CD8-positive, alpha-beta T cell (primary cell): ENCODE measurements at regions of chr19 and their contacts with region 1.

Region 1: DNA sequence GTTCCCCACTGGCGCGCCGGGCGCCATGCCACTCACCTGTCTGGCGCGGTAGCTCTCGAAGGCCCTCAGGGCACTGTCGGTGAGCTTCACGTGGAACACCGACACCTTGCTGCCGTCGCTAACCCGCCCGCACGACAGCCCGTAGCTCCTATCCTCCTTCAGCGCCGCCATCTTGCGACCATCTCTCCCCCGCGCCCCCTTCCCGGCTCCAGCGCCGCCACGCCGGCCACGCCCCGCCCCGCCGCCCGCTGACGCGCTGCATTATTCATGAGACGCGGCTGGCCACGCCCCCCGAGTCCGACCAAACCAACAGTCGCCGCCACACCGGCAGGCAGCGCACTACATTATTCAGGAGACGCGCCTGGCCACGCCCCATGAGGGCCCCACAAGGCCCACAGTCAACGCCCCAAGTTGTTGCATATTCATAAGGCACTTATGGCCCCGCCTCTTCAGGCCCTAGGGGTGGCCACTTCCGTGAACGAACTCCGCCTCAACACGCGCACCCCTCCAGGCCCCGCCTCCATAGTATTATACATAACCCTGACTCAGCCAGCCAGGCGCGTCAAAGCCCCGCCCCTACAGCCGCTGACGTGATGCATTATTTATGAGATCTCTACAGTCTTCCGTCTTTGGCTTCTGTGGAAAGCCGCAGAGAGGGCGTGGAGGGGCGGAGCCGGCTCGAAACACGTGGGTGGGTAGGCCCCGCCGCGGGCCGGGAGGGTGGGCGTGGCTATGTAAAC is at the start of gene ELL:
- DNase-seq: peak; percentile 100
- ATAC-seq: peak; percentile 89
- H3K4me3 ChIP-seq: peak within 1 kb of the TSS; percentile 85 to 91
- H3K4me3 Mint-ChIP-seq: peak within 1 kb of the TSS; percentile 95
- H3K27ac ChIP-seq: peak within 1 kb of the TSS; percentile 92 to 96
- H3K27ac Mint-ChIP-seq: peak within 1 kb of the TSS; percentile 95
- H3K4me1 ChIP-seq: peaks cover 9% of the 10 kb centered on the region
- H3K4me1 Mint-ChIP-seq: peaks cover 26% of the 10 kb centered on the region
- H3K27me3 ChIP-seq: no peaks in the 10 kb centered on the region
- H3K27me3 Mint-ChIP-seq: no peaks in the 10 kb centered on the region
- CTCF ChIP-seq: no peak
- total RNA-seq, gene ELL: 73.4 to 75.2 TPM

Region 2: DNA sequence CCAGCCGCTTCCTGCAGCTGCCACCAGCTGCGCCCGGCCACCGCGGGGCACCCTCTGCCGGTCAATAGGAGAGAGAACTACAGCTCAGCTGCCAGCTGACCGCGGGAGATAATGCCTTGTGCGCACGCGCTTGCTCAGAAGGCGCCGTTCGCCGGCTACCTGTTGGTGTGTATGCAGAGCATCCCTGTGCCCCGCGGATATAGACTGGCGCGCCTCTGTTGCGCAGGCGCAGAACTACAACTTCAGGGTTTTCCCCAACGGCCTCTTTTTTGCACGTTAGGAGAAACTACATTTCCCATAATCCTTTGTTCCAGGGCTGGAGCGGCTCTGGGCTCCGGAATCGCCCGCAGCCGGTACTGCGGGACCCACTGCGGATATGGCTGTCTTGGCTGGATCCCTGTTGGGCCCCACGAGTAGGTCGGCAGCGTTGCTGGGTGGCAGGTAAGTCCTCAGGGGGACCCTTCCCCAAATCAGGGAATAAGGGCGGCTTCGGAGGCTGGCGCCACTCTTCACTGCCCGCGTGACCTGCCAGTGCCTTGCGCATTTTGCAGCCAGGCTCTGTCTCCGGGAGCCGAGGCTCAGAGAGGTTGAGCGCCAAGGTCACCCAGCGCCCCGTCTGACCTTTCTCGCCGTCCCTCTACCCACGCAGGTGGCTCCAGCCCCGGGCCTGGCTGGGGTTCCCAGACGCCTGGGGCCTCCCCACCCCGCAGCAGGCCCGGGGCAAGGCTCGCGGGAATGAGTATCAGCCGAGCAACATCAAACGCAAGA is 1216.4 kb before region 1 on chr19 and contains the start of gene MRPL34:
- CTCF ChIA-PET with region 1: no interaction called
- POLR2A ChIA-PET with region 1: no interaction called
- intact Hi-C with region 1: loop called in 1 of 2 experiments (anchors 5 kb)
- DNase-seq: peak; percentile 85 to 99 (median 93)
- ATAC-seq: peak; percentile 53
- H3K4me3 ChIP-seq: peak within 1 kb of the TSS; percentile 77 to 79
- H3K4me3 Mint-ChIP-seq: peak within 1 kb of the TSS; percentile 89
- H3K27ac ChIP-seq: peak within 1 kb of the TSS; percentile 55 to 74
- H3K27ac Mint-ChIP-seq: peak within 1 kb of the TSS; percentile 91
- H3K4me1 ChIP-seq: peaks cover 44% of the 10 kb centered on the region
- H3K4me1 Mint-ChIP-seq: peaks cover 48% of the 10 kb centered on the region
- H3K27me3 ChIP-seq: no peaks in the 10 kb centered on the region
- H3K27me3 Mint-ChIP-seq: no peaks in the 10 kb centered on the region
- CTCF ChIP-seq: peak; percentile 57
- total RNA-seq, gene MRPL34: 29.5 to 33.8 TPM

Region 3: DNA sequence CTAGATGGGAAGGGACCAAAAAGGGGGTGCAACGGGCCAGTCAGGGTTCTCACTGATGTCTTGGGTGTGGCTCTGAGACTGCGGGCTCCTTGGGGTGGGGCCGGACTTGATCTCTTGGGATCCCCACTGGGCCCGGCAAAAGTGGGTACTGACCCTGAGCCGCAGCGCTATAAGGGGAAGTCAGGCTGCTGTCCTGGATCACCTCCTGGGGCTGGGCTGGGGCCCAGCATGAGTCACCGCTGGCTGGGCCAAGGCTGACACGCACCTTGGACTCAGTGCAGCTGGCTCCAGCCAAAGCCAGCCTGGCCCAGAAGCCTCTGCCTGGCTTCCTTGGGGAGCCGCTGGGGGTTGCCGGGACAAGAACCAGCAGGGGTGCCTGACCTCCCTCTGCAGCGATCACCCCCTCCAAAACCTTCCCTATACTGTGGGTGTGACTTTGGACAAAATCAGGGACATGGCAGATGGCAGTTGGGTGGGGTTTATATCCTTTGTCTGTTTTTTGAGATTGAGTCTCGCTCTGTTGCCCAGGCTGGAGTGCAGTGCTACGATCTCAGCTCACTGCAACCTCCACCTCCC is 247.2 kb before region 1 on chr19:
- CTCF ChIA-PET with region 1: no interaction called
- POLR2A ChIA-PET with region 1: no interaction called
- intact Hi-C with region 1: no loop called
- DNase-seq: peak in 3 of 9 experiments; percentile 35 to 65 (median 55)
- ATAC-seq: no peak
- H3K4me3 ChIP-seq: no peak overlapping the region
- H3K4me3 Mint-ChIP-seq: no peak overlapping the region
- H3K27ac ChIP-seq: no peak overlapping the region
- H3K27ac Mint-ChIP-seq: peak overlapping the region; percentile 57
- H3K4me1 ChIP-seq: peaks cover 33% of the 10 kb centered on the region
- H3K4me1 Mint-ChIP-seq: peaks cover 41% of the 10 kb centered on the region
- H3K27me3 ChIP-seq: no peaks in the 10 kb centered on the region
- H3K27me3 Mint-ChIP-seq: no peaks in the 10 kb centered on the region
- CTCF ChIP-seq: no peak

Region 4: GRCh38 chr19:18436671-18437490 is 85.2 kb before region 1 on chr19:
- CTCF ChIA-PET with region 1: no interaction called
- POLR2A ChIA-PET with region 1: interaction called, 3 read pairs
- intact Hi-C with region 1: loop called in 1 of 2 experiments (anchors 2 kb)
- DNase-seq: peak; percentile 65 to 94 (median 87)
- ATAC-seq: peak; percentile 74
- H3K4me3 ChIP-seq: peak overlapping the region; percentile 57 to 65
- H3K4me3 Mint-ChIP-seq: peak overlapping the region; percentile 81
- H3K27ac ChIP-seq: peak overlapping the region in 1 of 2 experiments; percentile 48
- H3K27ac Mint-ChIP-seq: peak overlapping the region; percentile 41
- H3K4me1 ChIP-seq: peaks cover 26% of the 10 kb centered on the region
- H3K4me1 Mint-ChIP-seq: peaks cover 24% of the 10 kb centered on the region
- H3K27me3 ChIP-seq: no peaks in the 10 kb centered on the region
- H3K27me3 Mint-ChIP-seq: no peaks in the 10 kb centered on the region
- CTCF ChIP-seq: no peak

Region 5: DNA sequence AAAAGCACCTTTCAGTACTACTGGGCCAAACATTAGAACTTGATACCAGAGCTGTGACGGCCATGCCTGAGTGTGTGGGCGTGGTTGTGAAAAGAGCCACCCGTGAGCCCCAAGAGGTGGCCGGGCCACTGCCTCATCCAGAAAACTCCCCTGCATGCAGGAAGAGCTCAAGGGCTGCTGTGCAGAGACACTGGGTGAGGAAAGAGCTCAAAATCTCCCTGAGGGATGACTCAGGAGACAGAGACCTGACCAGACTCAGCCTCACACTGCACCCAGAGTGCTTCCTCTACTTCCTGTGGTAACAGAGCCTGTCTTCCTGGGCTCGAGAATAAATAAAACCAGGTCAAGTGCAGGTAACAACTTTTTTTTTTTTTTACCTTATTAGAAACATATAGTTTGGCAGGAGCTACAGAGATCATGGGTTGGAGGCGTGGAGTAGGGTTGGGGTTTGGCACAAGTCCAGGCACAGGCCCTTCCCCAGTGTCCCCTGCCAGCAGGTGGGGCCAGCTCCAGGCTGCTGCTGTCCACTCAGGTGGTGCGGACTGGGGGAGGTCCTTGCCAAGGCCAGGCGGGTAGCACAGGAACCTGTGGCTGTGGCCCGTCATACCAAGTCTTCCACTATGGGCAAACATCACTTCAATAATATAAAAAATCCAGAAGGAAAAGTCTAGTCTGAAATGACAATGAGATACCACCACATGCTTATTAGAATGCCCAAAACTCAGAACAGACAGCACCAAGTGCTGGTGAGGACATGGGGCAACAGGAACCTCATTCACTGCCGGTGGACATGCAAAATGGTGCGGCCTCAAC is 25.7 kb before region 1 on chr19:
- CTCF ChIA-PET with region 1: interaction called, 31 read pairs
- POLR2A ChIA-PET with region 1: interaction called, 4 read pairs
- intact Hi-C with region 1: loop called (anchors 1 to 2 kb)
- DNase-seq: peak; percentile 38 to 94 (median 67)
- ATAC-seq: peak; percentile 86
- H3K4me3 ChIP-seq: peak overlapping the region in 1 of 2 experiments; percentile 21
- H3K4me3 Mint-ChIP-seq: peak overlapping the region; percentile 62
- H3K27ac ChIP-seq: peak overlapping the region; percentile 23 to 96
- H3K27ac Mint-ChIP-seq: peak overlapping the region; percentile 58
- H3K4me1 ChIP-seq: peaks cover 67% of the 10 kb centered on the region
- H3K4me1 Mint-ChIP-seq: peaks cover 80% of the 10 kb centered on the region
- H3K27me3 ChIP-seq: no peaks in the 10 kb centered on the region
- H3K27me3 Mint-ChIP-seq: no peaks in the 10 kb centered on the region
- CTCF ChIP-seq: no peak

Region 6: GRCh38 chr19:18571564-18572300 is 49.7 kb after region 1 on chr19 and contains the start of gene UBA52:
- CTCF ChIA-PET with region 1: interaction called, 24 read pairs
- POLR2A ChIA-PET with region 1: interaction called, 30 read pairs
- intact Hi-C with region 1: loop called in 1 of 2 experiments (anchors 1 kb)
- DNase-seq: peak; percentile 98 to 100 (median 99)
- ATAC-seq: peak; percentile 91
- H3K4me3 ChIP-seq: peak within 1 kb of the TSS; percentile 94 to 97
- H3K4me3 Mint-ChIP-seq: peak within 1 kb of the TSS; percentile 95
- H3K27ac ChIP-seq: peak within 1 kb of the TSS; percentile 95 to 96
- H3K27ac Mint-ChIP-seq: peak within 1 kb of the TSS; percentile 97
- H3K4me1 ChIP-seq: peaks cover 16% of the 10 kb centered on the region
- H3K4me1 Mint-ChIP-seq: peaks cover 19% of the 10 kb centered on the region
- H3K27me3 ChIP-seq: no peaks in the 10 kb centered on the region
- H3K27me3 Mint-ChIP-seq: no peaks in the 10 kb centered on the region
- CTCF ChIP-seq: no peak
- total RNA-seq, gene UBA52: 2,140 to 2,193 TPM

Region 7: GRCh38 chr19:18607226-18608101 is 85.4 kb after region 1 on chr19:
- CTCF ChIA-PET with region 1: no interaction called
- POLR2A ChIA-PET with region 1: no interaction called
- intact Hi-C with region 1: no loop called
- DNase-seq: no peak
- ATAC-seq: no peak
- H3K4me3 ChIP-seq: no peak overlapping the region
- H3K4me3 Mint-ChIP-seq: no peak overlapping the region
- H3K27ac ChIP-seq: no peak overlapping the region
- H3K27ac Mint-ChIP-seq: no peak overlapping the region
- H3K4me1 ChIP-seq: peaks cover 16% of the 10 kb centered on the region
- H3K4me1 Mint-ChIP-seq: peaks cover 26% of the 10 kb centered on the region
- H3K27me3 ChIP-seq: peaks cover 58 to 70% of the 10 kb centered on the region in 2 experiments
- H3K27me3 Mint-ChIP-seq: peaks cover 65% of the 10 kb centered on the region
- CTCF ChIP-seq: no peak

Region 8: GRCh38 chr19:18700501-18701249 is 178.6 kb after region 1 on chr19:
- CTCF ChIA-PET with region 1: no interaction called
- POLR2A ChIA-PET with region 1: no interaction called
- intact Hi-C with region 1: loop called in 1 of 2 experiments (anchors 1 kb)
- DNase-seq: peak; percentile 47 to 84 (median 73)
- ATAC-seq: peak; percentile 97
- H3K4me3 ChIP-seq: peak overlapping the region; percentile 69 to 82
- H3K4me3 Mint-ChIP-seq: peak overlapping the region; percentile 88
- H3K27ac ChIP-seq: peak overlapping the region; percentile 73 to 75
- H3K27ac Mint-ChIP-seq: peak overlapping the region; percentile 89
- H3K4me1 ChIP-seq: peaks cover 34% of the 10 kb centered on the region
- H3K4me1 Mint-ChIP-seq: peaks cover 38% of the 10 kb centered on the region
- H3K27me3 ChIP-seq: no peaks in the 10 kb centered on the region
- H3K27me3 Mint-ChIP-seq: no peaks in the 10 kb centered on the region
- CTCF ChIP-seq: no peak

Region 9: GRCh38 chr19:19063183-19064097 is 541.4 kb after region 1 on chr19 and contains the start of gene SLC25A42:
- CTCF ChIA-PET with region 1: no interaction called
- POLR2A ChIA-PET with region 1: no interaction called
- intact Hi-C with region 1: loop called (anchors 1 to 10 kb)
- DNase-seq: peak; percentile 97 to 100 (median 99)
- ATAC-seq: peak; percentile 90
- H3K4me3 ChIP-seq: peak within 1 kb of the TSS; percentile 61 to 87
- H3K4me3 Mint-ChIP-seq: peak within 1 kb of the TSS; percentile 89
- H3K27ac ChIP-seq: peak within 1 kb of the TSS; percentile 47 to 77
- H3K27ac Mint-ChIP-seq: peak within 1 kb of the TSS; percentile 88
- H3K4me1 ChIP-seq: peaks cover 23% of the 10 kb centered on the region
- H3K4me1 Mint-ChIP-seq: peaks cover 32% of the 10 kb centered on the region
- H3K27me3 ChIP-seq: no peaks in the 10 kb centered on the region
- H3K27me3 Mint-ChIP-seq: no peaks in the 10 kb centered on the region
- CTCF ChIP-seq: no peak
- total RNA-seq, gene SLC25A42: 8.3 to 10.6 TPM